Psoas muscle (tissue), 8 donors: ENCODE measurements at regions of chr3 and their contacts with region 1.

Region 1: GRCh38 chr3:172039436-172040077 is at the start of gene FNDC3B:
- DNase-seq: peak; percentile 93 to 96
- ATAC-seq: peak; percentile 84 to 86 (median 84)
- H3K4me3 ChIP-seq: peak within 1 kb of the TSS; percentile 95
- H3K27ac ChIP-seq: peak within 1 kb of the TSS; percentile 98
- H3K4me1 ChIP-seq: peaks cover 34% of the 10 kb centered on the region
- H3K27me3 ChIP-seq: no peaks in the 10 kb centered on the region
- CTCF ChIP-seq: no peak
- total RNA-seq, gene FNDC3B: 50.8 to 133 (median 74.1) TPM

Region 2: DNA sequence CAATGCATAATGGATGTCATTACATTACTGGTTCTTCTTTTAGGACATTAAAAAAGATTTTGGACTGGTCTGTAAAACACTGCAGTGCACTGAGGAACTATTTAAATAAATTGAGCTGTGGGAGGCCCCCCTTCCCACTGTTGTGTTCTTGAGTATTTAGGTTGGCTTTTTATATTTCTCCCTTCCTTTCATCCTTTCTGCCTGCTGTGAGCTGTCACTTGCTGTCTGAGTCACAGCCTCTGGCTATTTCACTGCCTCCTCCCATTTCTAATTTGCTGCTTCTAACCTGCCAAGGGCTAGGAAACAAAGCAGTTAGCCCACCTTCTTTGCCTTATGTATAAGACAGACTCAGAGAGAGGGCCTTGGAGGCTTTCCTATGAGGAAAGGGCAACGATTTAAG is 89.2 kb before region 1 on chr3:
- intact Hi-C with region 1: no loop called
- DNase-seq: no peak
- ATAC-seq: no peak
- H3K4me3 ChIP-seq: no peak overlapping the region
- H3K27ac ChIP-seq: no peak overlapping the region
- H3K4me1 ChIP-seq: no peaks in the 10 kb centered on the region
- H3K27me3 ChIP-seq: no peaks in the 10 kb centered on the region
- CTCF ChIP-seq: no peak

Region 3: DNA sequence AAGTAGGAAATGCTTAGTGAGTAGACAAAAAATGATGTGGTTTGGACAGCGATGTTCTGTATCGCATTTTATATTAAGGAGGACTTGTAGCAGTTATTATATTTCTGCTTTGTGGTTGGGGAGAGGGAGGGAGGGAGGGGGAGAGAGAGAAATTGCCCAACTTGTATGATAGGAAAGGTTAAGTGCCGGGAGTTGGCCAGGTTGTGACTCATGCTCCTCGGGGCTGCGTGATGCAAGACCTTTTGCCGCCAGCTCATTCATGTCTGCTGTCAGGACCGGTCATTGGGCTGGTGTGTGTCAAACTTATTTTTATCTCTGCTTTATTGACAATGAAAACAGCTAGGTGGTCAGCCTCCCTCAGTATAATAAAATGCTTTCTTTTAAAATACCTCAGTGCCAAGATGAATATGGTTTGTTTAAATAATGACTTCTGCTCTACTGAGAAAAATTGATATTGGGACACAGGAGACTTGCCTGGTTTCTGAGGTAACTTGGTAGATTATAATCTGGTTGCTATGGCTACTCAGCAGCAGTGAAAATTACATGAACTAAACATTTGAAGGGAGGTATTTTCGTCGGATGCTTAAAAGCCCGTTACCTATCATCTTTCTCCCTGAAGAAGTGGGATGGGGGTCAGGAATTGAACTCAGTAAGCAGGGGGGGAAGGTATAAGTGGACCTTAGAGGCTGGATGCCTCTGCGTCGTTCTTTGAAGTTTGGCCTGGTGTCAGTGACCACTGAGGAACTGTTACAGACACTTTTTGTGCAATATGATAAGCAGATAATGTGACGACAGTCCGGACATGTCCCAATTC is 90.5 kb after region 1 on chr3:
- intact Hi-C with region 1: loop called (anchors 5 to 10 kb)
- DNase-seq: peak; percentile 94 to 96
- ATAC-seq: peak; percentile 87 to 93 (median 89)
- H3K4me3 ChIP-seq: peak overlapping the region; percentile 33
- H3K27ac ChIP-seq: peak overlapping the region; percentile 95
- H3K4me1 ChIP-seq: peaks cover 91% of the 10 kb centered on the region
- H3K27me3 ChIP-seq: no peaks in the 10 kb centered on the region
- CTCF ChIP-seq: no peak

Region 4: GRCh38 chr3:172153335-172153861 is 113.8 kb after region 1 on chr3:
- intact Hi-C with region 1: loop called in 1 of 2 experiments (anchors 5 kb)
- DNase-seq: peak; percentile 90 to 94
- ATAC-seq: peak; percentile 94 to 97 (median 96)
- H3K4me3 ChIP-seq: peak overlapping the region; percentile 45
- H3K27ac ChIP-seq: peak overlapping the region; percentile 91
- H3K4me1 ChIP-seq: peaks cover 78% of the 10 kb centered on the region
- H3K27me3 ChIP-seq: no peaks in the 10 kb centered on the region
- CTCF ChIP-seq: no peak

Region 5: GRCh38 chr3:172332256-172333041 is 292.9 kb after region 1 on chr3:
- intact Hi-C with region 1: loop called (anchors 5 to 10 kb)
- DNase-seq: no peak
- ATAC-seq: peak; percentile 81 to 90 (median 86)
- H3K4me3 ChIP-seq: no peak overlapping the region
- H3K27ac ChIP-seq: no peak overlapping the region
- H3K4me1 ChIP-seq: no peaks in the 10 kb centered on the region
- H3K27me3 ChIP-seq: no peaks in the 10 kb centered on the region
- CTCF ChIP-seq: peak; percentile 92

Region 6: GRCh38 chr3:172476347-172476746 is 436.8 kb after region 1 on chr3:
- intact Hi-C with region 1: loop called in 1 of 2 experiments (anchors 10 kb)
- DNase-seq: no peak
- ATAC-seq: no peak
- H3K4me3 ChIP-seq: peak overlapping the region; percentile 55
- H3K27ac ChIP-seq: no peak overlapping the region
- H3K4me1 ChIP-seq: no peaks in the 10 kb centered on the region
- H3K27me3 ChIP-seq: no peaks in the 10 kb centered on the region
- CTCF ChIP-seq: no peak